Activated naive CD4-positive, alpha-beta T cell treated with anti-CD3 and anti-CD28 coated beads for 36 hours (primary cell): ENCODE measurements at regions of chr15 and their contacts with region 1.

Region 1: DNA sequence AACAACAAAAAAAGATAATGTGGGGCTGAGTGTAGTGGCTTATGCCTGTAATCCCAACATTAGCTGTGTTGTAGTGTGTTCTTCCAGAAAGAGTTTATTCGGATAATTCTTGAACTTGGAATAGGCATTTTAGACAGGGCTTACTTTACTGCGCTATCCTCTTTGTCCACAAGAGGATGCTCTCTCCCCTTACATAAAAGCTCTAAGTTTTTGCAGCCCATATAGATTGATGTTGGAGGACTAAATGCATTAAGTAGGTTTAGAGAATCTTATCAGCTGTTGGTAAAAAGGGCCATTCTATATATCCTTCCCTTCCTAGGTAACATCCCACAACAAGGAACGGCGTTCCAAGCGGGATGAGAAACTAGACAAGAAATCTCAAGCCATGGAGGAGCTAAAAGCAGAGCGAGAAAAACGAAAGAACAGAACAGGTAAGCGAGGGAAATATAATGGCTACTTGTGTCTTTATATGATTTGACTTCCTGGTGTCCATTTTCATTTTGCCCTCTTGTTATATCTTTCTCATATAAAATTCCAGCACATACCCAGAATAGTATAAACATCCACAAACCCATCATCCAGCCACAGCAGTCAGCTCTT is 27.8 kb upstream of the ITPKA start:
- DNase-seq: peak; percentile 57
- H3K4me3 Mint-ChIP-seq: no peak overlapping the region
- H3K27ac Mint-ChIP-seq: no peak overlapping the region
- H3K4me1 Mint-ChIP-seq: no peaks in the 10 kb centered on the region
- H3K27me3 Mint-ChIP-seq: no peaks in the 10 kb centered on the region

Region 2: GRCh38 chr15:41207687-41208448 is 258.1 kb before region 1 on chr15:
- CTCF ChIA-PET with region 1: no interaction called
- intact Hi-C with region 1: no loop called
- DNase-seq: no peak
- H3K4me3 Mint-ChIP-seq: no peak overlapping the region
- H3K27ac Mint-ChIP-seq: no peak overlapping the region
- H3K4me1 Mint-ChIP-seq: no peaks in the 10 kb centered on the region
- H3K27me3 Mint-ChIP-seq: peaks cover 2% of the 10 kb centered on the region

Region 3: GRCh38 chr15:41476416-41477048 is 10.6 kb after region 1 on chr15:
- CTCF ChIA-PET with region 1: interaction called, 13 read pairs
- intact Hi-C with region 1: no loop called
- DNase-seq: no peak
- H3K4me3 Mint-ChIP-seq: no peak overlapping the region
- H3K27ac Mint-ChIP-seq: no peak overlapping the region
- H3K4me1 Mint-ChIP-seq: peaks cover 8% of the 10 kb centered on the region
- H3K27me3 Mint-ChIP-seq: no peaks in the 10 kb centered on the region

Region 4: GRCh38 chr15:41501191-41501917 is 35.4 kb after region 1 on chr15:
- CTCF ChIA-PET with region 1: interaction called, 34 read pairs
- intact Hi-C with region 1: no loop called
- DNase-seq: peak; percentile 54
- H3K4me3 Mint-ChIP-seq: peak overlapping the region; percentile 63
- H3K27ac Mint-ChIP-seq: no peak overlapping the region
- H3K4me1 Mint-ChIP-seq: peaks cover 21% of the 10 kb centered on the region
- H3K27me3 Mint-ChIP-seq: peaks cover 69% of the 10 kb centered on the region

Region 5: DNA sequence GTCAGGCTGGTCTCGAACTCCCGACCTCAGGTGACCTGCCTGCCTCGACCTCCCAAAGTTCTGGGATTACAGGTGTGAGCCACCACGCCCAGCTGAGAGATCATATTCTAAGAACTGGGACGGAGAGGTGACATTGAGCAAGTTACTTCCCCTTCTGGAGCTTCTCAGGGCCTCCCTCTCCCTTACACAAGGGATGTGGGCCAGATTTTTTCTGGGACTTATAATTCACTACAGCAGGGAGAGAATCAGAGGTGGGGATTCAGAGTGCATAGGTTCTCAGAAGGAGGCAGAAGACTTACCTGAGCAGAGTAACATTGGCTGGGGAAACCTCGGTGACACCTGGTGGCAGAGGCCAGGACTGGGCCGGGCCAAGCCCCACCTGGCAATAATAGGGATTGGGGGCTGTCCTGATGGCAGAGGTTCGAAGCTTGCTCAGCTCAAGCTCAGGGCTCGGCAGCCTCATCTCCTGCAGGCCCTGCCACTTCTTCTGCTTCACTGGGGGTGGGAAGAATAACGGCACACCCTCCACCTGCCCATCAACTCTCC is 40.9 kb after region 1 on chr15:
- CTCF ChIA-PET with region 1: interaction called, 34 read pairs
- intact Hi-C with region 1: loop called (anchors 1 kb)
- DNase-seq: no peak
- H3K4me3 Mint-ChIP-seq: no peak overlapping the region
- H3K27ac Mint-ChIP-seq: no peak overlapping the region
- H3K4me1 Mint-ChIP-seq: peaks cover 10% of the 10 kb centered on the region
- H3K27me3 Mint-ChIP-seq: peaks cover 38% of the 10 kb centered on the region

Region 6: GRCh38 chr15:41581110-41581509 is 115.2 kb after region 1 on chr15:
- CTCF ChIA-PET with region 1: interaction called, 5 read pairs
- intact Hi-C with region 1: loop called (anchors 1 kb)
- DNase-seq: no peak
- H3K4me3 Mint-ChIP-seq: no peak overlapping the region
- H3K27ac Mint-ChIP-seq: no peak overlapping the region
- H3K4me1 Mint-ChIP-seq: peaks cover 6% of the 10 kb centered on the region
- H3K27me3 Mint-ChIP-seq: peaks cover 23% of the 10 kb centered on the region

Region 7: GRCh38 chr15:41603941-41604911 is 138.3 kb after region 1 on chr15:
- CTCF ChIA-PET with region 1: interaction called, 8 read pairs
- intact Hi-C with region 1: loop called (anchors 5 kb)
- DNase-seq: peak; percentile 72
- H3K4me3 Mint-ChIP-seq: peak overlapping the region; percentile 69
- H3K27ac Mint-ChIP-seq: no peak overlapping the region
- H3K4me1 Mint-ChIP-seq: peaks cover 11% of the 10 kb centered on the region
- H3K27me3 Mint-ChIP-seq: peaks cover 2% of the 10 kb centered on the region

Region 8: GRCh38 chr15:41660235-41661077 is 194.5 kb after region 1 on chr15 and contains the start of gene MGA:
- CTCF ChIA-PET with region 1: no interaction called
- intact Hi-C with region 1: loop called (anchors 1 kb)
- DNase-seq: peak; percentile 84
- H3K4me3 Mint-ChIP-seq: peak within 1 kb of the TSS; percentile 95
- H3K27ac Mint-ChIP-seq: peak within 1 kb of the TSS; percentile 81
- H3K4me1 Mint-ChIP-seq: peaks cover 32% of the 10 kb centered on the region
- H3K27me3 Mint-ChIP-seq: peaks cover 2% of the 10 kb centered on the region
- total RNA-seq, gene MGA: 27.4 to 28.3 TPM